H1 (cell line): ENCODE measurements at regions of chr4 and their contacts with region 1.

Region 1: DNA sequence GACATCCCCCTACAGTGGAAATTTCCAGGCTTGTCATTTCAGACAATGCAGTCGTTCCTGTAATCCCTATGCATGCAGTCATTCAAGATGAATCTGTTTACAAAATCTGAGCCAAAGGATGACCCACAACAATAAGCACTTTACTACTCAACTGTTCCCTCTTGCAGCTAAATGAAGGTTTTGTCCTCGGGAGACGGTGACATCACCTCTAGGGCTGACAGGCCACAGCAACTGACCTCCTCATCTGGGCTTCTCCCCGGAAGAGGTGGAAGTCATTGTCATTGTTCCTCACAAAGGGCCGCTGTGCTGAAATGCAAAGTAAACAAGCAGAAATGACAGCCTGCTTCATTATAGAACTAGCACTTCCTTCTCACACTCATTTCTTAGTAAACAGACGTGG is 29.2 kb downstream of the CLRN2 start:
- DNase-seq: peak in 1 of 2 experiments; percentile 25
- H3K4me3 ChIP-seq: no peak overlapping the region
- H3K27ac ChIP-seq: no peak overlapping the region
- H3K4me1 ChIP-seq: peaks cover 0 to 4% (median 2%) of the 10 kb centered on the region in 4 experiments; a peak in 4 of 7 replicates
- H3K27me3 ChIP-seq: no peaks in the 10 kb centered on the region
- CTCF ChIP-seq: no peak
- EP300 ChIP-seq: no peak
- POLR2A ChIP-seq: no peak
- RAD21 ChIP-seq: no peak

Region 2: GRCh38 chr4:17494258-17494657 is 49.9 kb before region 1 on chr4:
- CTCF ChIA-PET with region 1: no interaction called
- POLR2A ChIA-PET with region 1: no interaction called
- DNase-seq: no peak
- H3K4me3 ChIP-seq: no peak overlapping the region
- H3K27ac ChIP-seq: no peak overlapping the region
- H3K4me1 ChIP-seq: peaks cover 0 to 6% (median 4%) of the 10 kb centered on the region in 4 experiments; a peak in 4 of 7 replicates
- H3K27me3 ChIP-seq: no peaks in the 10 kb centered on the region
- CTCF ChIP-seq: no peak
- EP300 ChIP-seq: no peak
- POLR2A ChIP-seq: no peak
- RAD21 ChIP-seq: no peak

Region 3: GRCh38 chr4:17515445-17516407 is 28.5 kb before region 1 on chr4:
- CTCF ChIA-PET with region 1: interaction called, 11 read pairs
- POLR2A ChIA-PET with region 1: no interaction called
- DNase-seq: no peak
- H3K4me3 ChIP-seq: no peak overlapping the region
- H3K27ac ChIP-seq: no peak overlapping the region
- H3K4me1 ChIP-seq: peaks cover 5 to 9% (median 7%) of the 10 kb centered on the region in 4 experiments
- H3K27me3 ChIP-seq: peaks cover 0 to 4% (median 0%) of the 10 kb centered on the region in 4 experiments; a peak in 3 of 7 replicates
- CTCF ChIP-seq: no peak
- EP300 ChIP-seq: no peak
- POLR2A ChIP-seq: no peak
- RAD21 ChIP-seq: no peak

Region 4: DNA sequence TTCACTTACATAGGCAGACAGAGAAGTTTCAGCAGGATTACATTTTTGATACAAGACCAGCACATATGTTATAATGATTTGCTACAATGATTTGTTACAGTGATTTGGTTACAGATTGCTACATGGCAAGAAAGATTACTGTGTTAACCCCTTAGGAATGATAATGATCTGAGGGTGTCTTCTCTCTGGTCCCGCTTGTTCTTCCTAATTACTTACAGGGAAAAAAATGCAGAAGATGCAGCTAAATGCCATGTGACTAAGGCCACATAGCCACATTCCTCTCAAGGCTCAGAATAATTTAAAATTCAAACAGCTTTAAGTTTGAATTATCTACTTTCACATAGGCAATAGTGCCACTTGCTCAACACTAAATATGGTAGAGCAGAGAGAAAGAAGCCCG is 23.1 kb after region 1 on chr4:
- CTCF ChIA-PET with region 1: interaction called, 28 read pairs
- POLR2A ChIA-PET with region 1: interaction called, 3 read pairs
- DNase-seq: no peak
- H3K4me3 ChIP-seq: no peak overlapping the region
- H3K27ac ChIP-seq: no peak overlapping the region
- H3K4me1 ChIP-seq: no peaks in the 10 kb centered on the region
- H3K27me3 ChIP-seq: no peaks in the 10 kb centered on the region
- CTCF ChIP-seq: no peak
- EP300 ChIP-seq: no peak
- POLR2A ChIP-seq: no peak
- RAD21 ChIP-seq: no peak

Region 5: DNA sequence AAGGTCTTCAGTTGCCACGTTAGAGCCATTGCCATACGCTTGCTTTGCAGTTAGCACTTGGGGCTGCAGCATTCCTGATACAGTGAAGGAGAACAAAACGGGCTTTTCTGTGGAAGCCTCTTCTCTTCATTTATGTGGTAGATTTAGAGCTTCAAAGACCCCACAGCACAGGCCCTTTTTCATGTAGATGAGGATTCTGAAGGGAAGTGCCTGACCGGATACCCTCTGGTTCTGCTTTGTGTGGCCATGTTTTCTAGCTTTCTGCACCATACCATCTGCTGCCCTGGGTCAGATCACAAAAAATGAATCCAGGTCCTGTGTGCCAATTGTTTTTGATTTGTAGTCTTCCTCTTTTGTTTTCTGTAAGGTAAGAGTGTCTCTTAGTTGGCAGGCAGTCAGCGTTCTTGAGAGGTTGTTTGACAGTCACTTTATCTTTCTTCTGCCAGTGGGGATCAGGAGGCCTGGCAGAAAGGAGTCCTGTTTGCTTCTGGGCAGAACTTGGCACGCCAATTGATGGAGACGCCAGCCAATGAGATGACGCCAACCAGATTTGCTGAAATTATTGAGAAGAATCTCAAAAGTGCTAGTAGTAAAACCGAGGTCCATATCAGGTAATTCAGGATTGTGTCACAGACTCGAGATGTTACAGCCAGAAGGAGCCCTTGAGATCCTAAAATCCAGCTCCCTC is 40.5 kb after region 1 on chr4:
- CTCF ChIA-PET with region 1: interaction called, 10 read pairs
- POLR2A ChIA-PET with region 1: no interaction called
- DNase-seq: no peak
- H3K4me3 ChIP-seq: no peak overlapping the region
- H3K27ac ChIP-seq: no peak overlapping the region
- H3K4me1 ChIP-seq: no peaks in the 10 kb centered on the region; a peak in 1 of 7 replicates
- H3K27me3 ChIP-seq: no peaks in the 10 kb centered on the region
- CTCF ChIP-seq: no peak
- EP300 ChIP-seq: no peak
- POLR2A ChIP-seq: no peak
- RAD21 ChIP-seq: no peak

Region 6: GRCh38 chr4:17636696-17637622 is 92.8 kb after region 1 on chr4:
- CTCF ChIA-PET with region 1: interaction called, 22 read pairs
- POLR2A ChIA-PET with region 1: no interaction called
- DNase-seq: peak; percentile 60 to 91
- H3K4me3 ChIP-seq: no peak overlapping the region
- H3K27ac ChIP-seq: no peak overlapping the region
- H3K4me1 ChIP-seq: 0 out of 7 replicates have a peak, but pooled peaks cover 0 to 3% (median 0%) of the 10 kb centered on the region in 4 experiments
- H3K27me3 ChIP-seq: no peaks in the 10 kb centered on the region
- CTCF ChIP-seq: peak; percentile 82 to 88 (median 88)
- EP300 ChIP-seq: no peak
- POLR2A ChIP-seq: 0 out of 3 replicates have a peak, but pooled peaks of 1 of the 2 experiments have one; percentile 2
- RAD21 ChIP-seq: peak; percentile 78 to 81

Region 7: GRCh38 chr4:17698116-17698515 is 153.9 kb after region 1 on chr4:
- CTCF ChIA-PET with region 1: no interaction called
- POLR2A ChIA-PET with region 1: no interaction called
- DNase-seq: no peak
- H3K4me3 ChIP-seq: no peak overlapping the region
- H3K27ac ChIP-seq: no peak overlapping the region
- H3K4me1 ChIP-seq: no peaks in the 10 kb centered on the region
- H3K27me3 ChIP-seq: no peaks in the 10 kb centered on the region
- CTCF ChIP-seq: no peak
- EP300 ChIP-seq: no peak
- POLR2A ChIP-seq: no peak
- RAD21 ChIP-seq: no peak